ENCODE measurements at regions of chr2 and their contacts with region 1.

Region 1: DNA sequence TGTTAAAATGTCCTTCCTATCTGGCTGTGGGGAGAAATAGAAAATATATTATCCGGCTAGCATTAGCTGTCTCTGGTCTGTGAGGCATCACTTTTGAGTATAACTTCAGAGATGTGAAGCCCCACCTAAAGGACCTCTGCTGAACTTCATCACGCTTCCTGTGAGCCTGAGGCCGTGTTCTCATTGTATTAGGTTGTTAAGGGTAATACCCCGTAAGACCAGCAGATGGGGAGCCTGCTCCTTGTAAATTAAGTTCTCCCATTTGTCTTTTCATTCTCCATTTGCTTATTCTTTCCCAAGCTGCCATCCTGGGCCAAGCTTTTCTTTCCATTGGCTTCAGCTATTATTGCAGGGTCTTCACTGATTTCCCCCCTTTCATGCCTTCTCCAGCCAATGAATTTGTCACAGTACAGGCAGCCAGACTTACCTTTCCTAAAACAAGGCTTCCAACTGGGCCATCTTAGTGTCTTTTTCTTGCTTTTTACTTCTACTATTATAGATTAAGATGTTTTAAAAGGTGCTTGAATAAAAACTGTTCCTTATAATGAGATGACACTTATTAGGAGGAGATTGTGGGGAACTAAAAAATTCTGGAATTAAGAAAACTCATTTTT is 12.4 kb downstream of the NIF3L1 start:
- DNase-seq: no peak
- H3K4me3 ChIP-seq: no peak overlapping the region
- H3K27ac ChIP-seq: no peak overlapping the region
- H3K4me1 ChIP-seq: no peaks in the 10 kb centered on the region
- H3K27me3 ChIP-seq: no peaks in the 10 kb centered on the region
- CTCF ChIP-seq: peak; percentile 44 to 65 (median 52)
- POLR2A ChIP-seq: no peak

Region 2: DNA sequence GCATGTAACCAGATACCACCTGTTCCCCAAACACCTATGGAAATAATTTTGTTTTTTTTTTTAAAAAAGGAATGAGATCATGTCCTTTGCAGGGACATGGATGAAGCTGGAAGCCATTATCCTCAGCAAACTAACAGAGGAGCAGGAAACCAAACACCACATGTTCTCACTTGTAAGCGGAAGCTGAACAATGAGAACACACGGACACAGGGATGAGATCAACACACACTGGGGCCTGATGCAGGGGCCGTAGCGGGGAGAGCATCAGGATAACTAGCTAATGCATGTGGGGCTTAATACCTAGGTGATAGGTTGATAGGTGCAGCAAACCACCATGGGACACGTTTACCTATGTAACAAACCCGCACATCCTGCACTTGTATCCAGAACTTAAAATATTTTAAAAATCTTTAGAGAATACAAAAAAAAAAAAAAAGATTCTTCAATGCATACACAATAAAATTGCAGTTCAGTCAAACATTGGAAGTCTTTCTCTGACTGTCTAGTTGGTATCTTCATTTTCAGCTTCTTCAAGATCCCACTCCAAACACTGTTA is 269.8 kb after region 1 on chr2:
- intact Hi-C with region 1: loop called (anchors 10 kb)
- DNase-seq: no peak
- H3K4me3 ChIP-seq: no peak overlapping the region
- H3K27ac ChIP-seq: no peak overlapping the region
- H3K4me1 ChIP-seq: no peaks in the 10 kb centered on the region
- H3K27me3 ChIP-seq: no peaks in the 10 kb centered on the region
- CTCF ChIP-seq: no peak
- POLR2A ChIP-seq: no peak